AG04449 (cell line): ENCODE measurements at regions of chr3 and their contacts with region 1.

Region 1: GRCh38 chr3:159804726-159805410 is 183.8 kb upstream of the IL12A start:
- DNase-seq: no peak
- H3K4me3 ChIP-seq: no peak overlapping the region
- CTCF ChIP-seq: peak; percentile 92

Region 2: DNA sequence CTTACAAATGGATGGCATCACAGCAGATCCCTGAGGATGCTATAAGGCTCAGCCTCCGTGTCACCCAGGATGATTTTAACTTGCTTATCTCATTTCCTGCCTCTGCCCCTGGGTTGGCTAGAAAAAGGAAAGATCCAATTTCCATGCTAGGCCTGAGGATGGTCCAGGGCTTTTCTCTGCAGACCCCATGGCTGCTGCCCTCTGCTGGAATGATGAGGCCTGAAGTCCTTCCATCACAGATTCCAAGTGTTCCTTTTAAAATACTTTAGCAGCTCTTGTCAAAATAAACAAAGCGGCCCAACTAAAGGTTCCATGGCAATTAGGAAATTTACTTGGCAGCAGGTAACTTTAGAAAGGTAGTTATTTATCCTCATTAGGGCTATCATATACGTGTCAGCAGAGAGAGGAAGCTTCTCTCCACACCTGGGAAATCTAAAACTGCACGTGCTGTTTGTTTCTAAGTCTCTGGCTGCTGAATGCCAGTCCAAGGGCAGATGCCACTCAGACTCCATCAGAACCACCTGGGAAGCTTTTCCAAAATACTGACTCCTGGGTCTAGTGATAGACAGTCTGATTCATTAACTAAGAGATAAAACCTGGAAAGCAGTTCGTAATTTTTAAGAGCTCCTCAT is 218.2 kb before region 1 on chr3:
- CTCF ChIA-PET with region 1: interaction called, 15 read pairs
- POLR2A ChIA-PET with region 1: no interaction called
- DNase-seq: no peak
- H3K4me3 ChIP-seq: no peak overlapping the region
- CTCF ChIP-seq: peak; percentile 70

Region 3: GRCh38 chr3:159616212-159616825 is 188.5 kb before region 1 on chr3:
- CTCF ChIA-PET with region 1: interaction called, 83 read pairs
- POLR2A ChIA-PET with region 1: no interaction called
- DNase-seq: no peak
- H3K4me3 ChIP-seq: no peak overlapping the region
- CTCF ChIP-seq: peak; percentile 65

Region 4: GRCh38 chr3:159634483-159634882 is 170.4 kb before region 1 on chr3:
- CTCF ChIA-PET with region 1: interaction called, 10 read pairs
- POLR2A ChIA-PET with region 1: no interaction called
- DNase-seq: no peak
- H3K4me3 ChIP-seq: no peak overlapping the region
- CTCF ChIP-seq: no peak

Region 5: GRCh38 chr3:159763602-159764489 is 41.0 kb before region 1 on chr3:
- CTCF ChIA-PET with region 1: interaction called, 131 read pairs
- POLR2A ChIA-PET with region 1: interaction called, 10 read pairs
- DNase-seq: no peak
- H3K4me3 ChIP-seq: peak overlapping the region; percentile 89
- CTCF ChIP-seq: peak; percentile 21

Region 6: DNA sequence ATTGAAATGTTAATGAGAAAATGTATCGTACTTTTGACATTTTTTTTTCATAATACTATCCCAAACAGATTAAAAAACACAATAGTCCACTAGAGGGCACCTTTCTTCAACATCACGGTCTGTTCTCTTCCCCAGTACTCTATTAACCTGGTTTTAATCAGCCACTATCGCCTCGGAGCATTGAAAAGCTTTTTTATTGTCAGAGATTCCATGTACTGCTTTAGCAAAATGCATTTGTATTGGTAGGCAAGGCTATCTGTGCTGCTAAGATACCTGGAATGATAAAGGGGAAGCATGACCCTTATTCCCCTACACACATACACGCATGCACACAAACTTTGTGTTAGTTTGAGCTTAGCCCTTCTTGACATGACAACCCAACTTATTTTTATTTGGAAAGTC is 23.7 kb after region 1 on chr3:
- CTCF ChIA-PET with region 1: interaction called, 10 read pairs
- POLR2A ChIA-PET with region 1: no interaction called
- DNase-seq: no peak
- H3K4me3 ChIP-seq: no peak overlapping the region
- CTCF ChIP-seq: peak; percentile 33